ENCODE measurements at regions of chr16 and their contacts with region 1.

Region 1: GRCh38 chr16:87387942-87388817 is 4.0 kb upstream of the MAP1LC3B start:
- DNase-seq: peak; percentile 94 to 99
- H3K4me3 ChIP-seq: no peak overlapping the region
- H3K4me1 ChIP-seq: peaks cover 36% of the 10 kb centered on the region
- H3K27me3 ChIP-seq: no peaks in the 10 kb centered on the region

Region 2: DNA sequence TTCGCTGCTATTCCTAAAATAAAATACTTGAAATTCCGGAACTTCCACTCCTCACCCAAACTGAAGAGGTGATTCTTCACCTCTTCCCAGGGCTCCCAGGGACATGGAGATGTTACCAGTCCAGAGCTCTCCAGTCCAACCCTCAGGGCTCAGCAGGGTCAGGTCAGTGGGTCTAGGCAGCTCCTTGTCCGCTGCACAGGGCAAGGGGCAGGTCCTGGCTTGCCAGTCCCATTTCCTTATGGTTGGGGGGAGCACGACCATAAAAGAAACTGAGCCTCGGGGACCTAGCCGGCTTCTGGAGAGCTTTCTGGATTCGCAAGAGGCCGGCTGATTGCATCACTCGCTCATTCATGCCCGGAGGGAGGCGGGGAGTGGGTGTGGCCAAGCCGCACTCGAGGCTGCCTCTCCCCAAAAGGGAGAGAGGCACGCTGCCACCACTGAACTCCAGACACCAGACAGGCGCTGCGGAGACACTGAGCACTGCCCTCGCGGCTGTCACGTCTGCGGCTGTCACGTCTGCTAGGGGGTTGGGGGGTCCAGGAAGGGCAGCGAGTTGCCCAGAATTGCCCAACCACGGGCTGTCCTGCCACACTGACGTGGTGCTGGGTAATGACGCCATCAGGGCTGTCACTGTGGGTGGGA is 465.4 kb after region 1 on chr16:
- in situ Hi-C with region 1: loop called (anchors 25 kb)
- DNase-seq: peak; percentile 92 to 96
- H3K4me3 ChIP-seq: 0 out of 2 replicates have a peak overlapping the region, but pooled peaks have one; percentile 10
- H3K4me1 ChIP-seq: peaks cover 20% of the 10 kb centered on the region
- H3K27me3 ChIP-seq: no peaks in the 10 kb centered on the region

Measured in HAP-1 (cell line).